CD8-positive, alpha-beta T cell (primary cell): ENCODE measurements at regions of chr16 and their contacts with region 1.

Region 1: DNA sequence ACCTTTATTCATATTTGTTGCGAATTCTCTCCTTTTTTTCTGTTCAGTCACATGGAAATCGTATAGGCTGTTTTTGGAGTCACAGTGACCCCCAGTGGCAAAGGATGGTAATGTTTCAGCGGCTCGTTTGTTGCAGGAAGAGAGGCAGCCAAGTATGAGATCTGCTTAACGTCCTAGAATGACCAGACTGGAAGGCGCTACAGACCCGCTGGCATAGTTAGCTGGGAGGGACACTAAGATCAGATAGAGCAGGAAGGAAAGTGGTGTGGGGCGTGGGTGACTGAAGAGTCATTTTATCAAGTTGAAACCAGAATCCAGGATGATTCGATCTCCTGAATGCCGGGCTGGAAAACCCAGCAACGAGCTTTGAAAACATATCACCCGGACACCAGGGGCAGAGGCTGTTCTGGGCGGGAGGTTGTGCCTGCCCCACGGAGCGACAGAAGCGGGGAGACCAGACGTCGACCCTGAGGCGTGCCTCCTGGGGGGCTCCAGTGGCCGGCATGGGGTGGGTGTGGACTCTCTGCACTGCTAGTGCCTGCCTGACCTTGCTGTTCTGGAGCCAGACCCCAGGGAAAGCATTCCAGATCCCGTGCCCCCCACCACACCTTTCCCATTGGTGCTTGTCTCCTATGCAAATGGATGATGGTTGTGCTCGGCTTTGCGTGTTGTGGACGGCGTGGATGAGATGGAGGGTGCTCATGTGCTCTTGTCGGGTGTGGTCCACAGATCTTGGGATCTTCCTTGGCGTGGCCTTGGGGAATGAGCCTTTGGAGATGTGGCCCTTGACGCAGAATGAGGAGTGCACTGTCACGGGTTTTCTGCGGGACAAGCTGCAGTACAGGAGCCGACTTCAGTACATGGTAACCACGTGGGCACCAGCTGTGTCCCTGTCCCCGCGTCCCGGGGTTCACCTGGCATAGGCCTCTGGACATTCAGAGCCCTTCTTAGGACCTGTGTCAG is 7.7 kb downstream of the IL34 start:
- DNase-seq: peak; percentile 65 to 89 (median 79)
- ATAC-seq: peak; percentile 90
- H3K4me3 ChIP-seq: no peak overlapping the region
- H3K4me3 Mint-ChIP-seq: peak overlapping the region; percentile 13
- H3K27ac ChIP-seq: no peak overlapping the region
- H3K27ac Mint-ChIP-seq: no peak overlapping the region
- H3K4me1 ChIP-seq: no peaks in the 10 kb centered on the region
- H3K4me1 Mint-ChIP-seq: peaks cover 4% of the 10 kb centered on the region
- H3K27me3 ChIP-seq: no peaks in the 10 kb centered on the region
- H3K27me3 Mint-ChIP-seq: peaks cover 2% of the 10 kb centered on the region
- CTCF ChIP-seq: peak; percentile 80

Region 2: GRCh38 chr16:69709456-69710084 is 944.5 kb before region 1 on chr16:
- CTCF ChIA-PET with region 1: no interaction called
- POLR2A ChIA-PET with region 1: no interaction called
- intact Hi-C with region 1: loop called in 1 of 2 experiments (anchors 5 kb)
- DNase-seq: peak in 2 of 9 experiments; percentile 66 to 78
- ATAC-seq: peak; percentile 55
- H3K4me3 ChIP-seq: no peak overlapping the region
- H3K4me3 Mint-ChIP-seq: no peak overlapping the region
- H3K27ac ChIP-seq: no peak overlapping the region
- H3K27ac Mint-ChIP-seq: no peak overlapping the region
- H3K4me1 ChIP-seq: no peaks in the 10 kb centered on the region
- H3K4me1 Mint-ChIP-seq: peaks cover 4% of the 10 kb centered on the region
- H3K27me3 ChIP-seq: no peaks in the 10 kb centered on the region
- H3K27me3 Mint-ChIP-seq: no peaks in the 10 kb centered on the region
- CTCF ChIP-seq: peak; percentile 87

Region 3: DNA sequence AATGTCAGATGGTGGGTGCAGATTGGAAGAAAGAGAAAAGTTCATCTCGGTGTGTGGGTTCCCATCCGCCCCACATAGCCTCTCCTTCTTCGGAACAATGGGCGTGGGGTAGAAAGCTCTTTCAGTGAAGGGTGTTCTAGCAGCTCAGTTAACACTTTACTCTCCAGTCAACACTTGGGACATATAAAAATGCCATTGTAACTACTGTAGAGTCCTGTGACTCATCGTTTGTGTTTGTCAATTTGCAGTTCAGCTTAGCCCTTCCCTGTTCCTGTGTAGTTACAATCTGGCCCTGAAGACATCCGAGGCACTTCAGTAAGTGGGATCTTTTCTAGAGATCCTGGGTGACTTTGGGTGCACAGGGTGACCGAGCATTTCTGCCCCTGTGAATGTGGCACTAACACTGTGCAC is 492.0 kb before region 1 on chr16:
- CTCF ChIA-PET with region 1: interaction called, 4 read pairs
- POLR2A ChIA-PET with region 1: no interaction called
- intact Hi-C with region 1: loop called (anchors 10 kb)
- DNase-seq: no peak
- ATAC-seq: no peak
- H3K4me3 ChIP-seq: no peak overlapping the region
- H3K4me3 Mint-ChIP-seq: no peak overlapping the region
- H3K27ac ChIP-seq: no peak overlapping the region
- H3K27ac Mint-ChIP-seq: peak overlapping the region; percentile 24
- H3K4me1 ChIP-seq: no peaks in the 10 kb centered on the region
- H3K4me1 Mint-ChIP-seq: peaks cover 4% of the 10 kb centered on the region
- H3K27me3 ChIP-seq: no peaks in the 10 kb centered on the region
- H3K27me3 Mint-ChIP-seq: no peaks in the 10 kb centered on the region
- CTCF ChIP-seq: no peak

Region 4: DNA sequence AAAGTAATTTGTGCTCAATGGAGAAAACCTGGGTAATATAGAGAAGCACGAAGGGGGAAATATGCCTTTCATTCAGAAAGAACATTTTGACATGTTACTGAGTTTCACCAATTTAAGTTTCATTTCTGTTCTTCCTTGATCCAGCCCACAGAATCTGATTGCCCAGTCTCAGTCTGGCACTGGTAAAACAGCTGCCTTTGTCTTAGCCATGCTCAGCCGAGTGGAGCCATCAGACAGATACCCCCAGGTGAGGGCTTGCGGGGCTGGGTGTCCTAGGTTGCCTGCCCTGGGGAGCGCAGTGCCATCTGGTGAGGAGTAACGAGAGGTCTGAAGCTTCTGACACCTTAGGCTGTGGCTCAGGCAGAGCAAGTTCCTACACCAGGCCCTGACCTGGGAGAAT is 289.7 kb before region 1 on chr16:
- CTCF ChIA-PET with region 1: interaction called, 7 read pairs
- POLR2A ChIA-PET with region 1: no interaction called
- intact Hi-C with region 1: loop called in 1 of 2 experiments (anchors 1 kb)
- DNase-seq: no peak
- ATAC-seq: no peak
- H3K4me3 ChIP-seq: no peak overlapping the region
- H3K4me3 Mint-ChIP-seq: no peak overlapping the region
- H3K27ac ChIP-seq: no peak overlapping the region
- H3K27ac Mint-ChIP-seq: no peak overlapping the region
- H3K4me1 ChIP-seq: no peaks in the 10 kb centered on the region
- H3K4me1 Mint-ChIP-seq: peaks cover 2% of the 10 kb centered on the region
- H3K27me3 ChIP-seq: no peaks in the 10 kb centered on the region
- H3K27me3 Mint-ChIP-seq: no peaks in the 10 kb centered on the region
- CTCF ChIP-seq: no peak

Region 5: GRCh38 chr16:70534971-70535370 is 119.1 kb before region 1 on chr16:
- CTCF ChIA-PET with region 1: no interaction called
- POLR2A ChIA-PET with region 1: no interaction called
- intact Hi-C with region 1: loop called in 1 of 2 experiments (anchors 5 kb)
- DNase-seq: no peak
- ATAC-seq: no peak
- H3K4me3 ChIP-seq: no peak overlapping the region
- H3K4me3 Mint-ChIP-seq: no peak overlapping the region
- H3K27ac ChIP-seq: no peak overlapping the region
- H3K27ac Mint-ChIP-seq: no peak overlapping the region
- H3K4me1 ChIP-seq: no peaks in the 10 kb centered on the region
- H3K4me1 Mint-ChIP-seq: peaks cover 32% of the 10 kb centered on the region
- H3K27me3 ChIP-seq: no peaks in the 10 kb centered on the region
- H3K27me3 Mint-ChIP-seq: no peaks in the 10 kb centered on the region
- CTCF ChIP-seq: no peak

Region 6: DNA sequence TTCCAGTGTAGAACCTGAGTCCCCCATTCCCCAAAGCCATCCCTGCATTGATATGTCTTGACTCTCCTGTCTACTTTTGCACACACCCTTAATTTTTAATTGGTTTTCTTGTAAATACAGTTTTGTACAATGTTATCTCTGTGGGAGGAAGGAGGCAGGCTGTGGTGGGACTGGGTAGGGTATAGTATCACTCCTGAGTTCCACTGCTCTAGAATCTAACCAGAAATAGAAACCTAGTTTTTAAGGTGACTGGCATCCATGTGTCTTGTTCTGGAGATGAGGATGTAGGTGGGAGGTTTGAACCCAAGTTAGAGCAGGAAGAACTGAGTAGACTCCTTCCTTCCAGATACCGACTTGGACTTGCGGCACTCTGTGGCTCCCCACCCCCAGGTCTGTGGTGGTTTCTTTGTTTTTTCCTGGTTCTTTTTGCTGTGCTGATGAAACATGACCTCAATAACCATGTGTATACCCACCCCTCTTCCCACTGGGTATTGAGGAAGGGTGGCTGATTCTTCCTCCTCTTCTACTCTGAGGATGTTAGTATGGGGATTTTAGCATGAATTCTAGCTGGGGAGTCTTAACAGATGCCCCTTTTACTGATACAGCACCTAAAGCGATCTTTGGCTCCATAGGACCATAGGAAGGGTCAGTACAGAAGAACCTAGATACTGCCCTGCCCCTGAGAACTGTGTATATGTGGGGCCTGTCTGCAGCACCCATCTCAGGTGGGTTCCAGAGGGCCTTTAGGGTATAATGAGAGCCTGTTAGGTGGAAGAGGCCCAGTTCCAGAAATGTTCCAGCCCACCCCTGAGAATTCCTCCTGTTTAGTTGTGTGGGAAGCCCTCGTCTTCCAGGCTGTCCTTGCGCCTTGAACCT is 81.8 kb before region 1 on chr16:
- CTCF ChIA-PET with region 1: no interaction called
- POLR2A ChIA-PET with region 1: no interaction called
- intact Hi-C with region 1: no loop called
- DNase-seq: no peak
- ATAC-seq: no peak
- H3K4me3 ChIP-seq: no peak overlapping the region
- H3K4me3 Mint-ChIP-seq: no peak overlapping the region
- H3K27ac ChIP-seq: no peak overlapping the region
- H3K27ac Mint-ChIP-seq: peak overlapping the region; percentile 84
- H3K4me1 ChIP-seq: no peaks in the 10 kb centered on the region
- H3K4me1 Mint-ChIP-seq: peaks cover 11% of the 10 kb centered on the region
- H3K27me3 ChIP-seq: no peaks in the 10 kb centered on the region
- H3K27me3 Mint-ChIP-seq: no peaks in the 10 kb centered on the region
- CTCF ChIP-seq: no peak

Region 7: DNA sequence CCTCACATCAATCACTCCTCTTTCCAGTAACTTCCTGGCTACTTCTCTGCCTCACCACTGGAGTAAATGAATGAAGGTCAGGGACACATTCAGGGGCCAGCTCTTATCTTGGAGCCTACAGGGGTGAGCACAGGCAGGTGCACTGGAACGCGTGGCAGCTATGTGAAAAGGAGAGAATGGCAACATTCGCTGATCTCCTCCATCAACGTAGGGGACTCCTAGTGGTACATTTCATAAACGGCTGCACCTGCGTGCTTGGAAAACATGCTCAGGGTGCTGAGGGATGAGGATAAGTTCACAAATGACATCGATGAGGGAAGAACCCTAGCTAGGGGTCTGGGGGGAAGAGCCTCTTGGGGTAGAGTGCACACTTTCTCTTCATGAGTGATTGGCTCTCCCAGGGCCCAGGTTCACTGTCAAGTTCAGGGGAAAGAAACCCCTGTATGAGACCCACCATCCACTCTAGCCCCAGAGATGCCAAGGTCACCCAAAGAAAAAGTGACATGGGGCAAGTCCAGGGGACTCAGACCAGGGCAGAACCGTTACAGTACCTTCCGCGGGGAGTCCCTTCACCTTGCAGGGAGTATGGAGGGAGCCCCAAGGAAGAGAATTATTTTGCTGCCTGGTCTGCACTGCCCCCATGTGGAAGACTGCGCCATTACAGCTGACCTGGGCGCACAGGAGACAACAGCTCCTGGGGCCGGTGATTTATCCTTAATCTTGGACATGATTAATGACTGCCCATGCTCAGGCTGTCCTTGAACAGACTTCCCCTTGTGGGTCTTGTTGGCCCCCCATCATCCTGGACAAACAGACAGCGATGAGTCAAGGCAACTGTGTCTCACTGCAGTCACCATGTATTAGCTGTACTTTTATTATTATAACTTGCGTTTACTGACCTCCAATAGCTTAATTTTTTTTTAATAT is 116.8 kb after region 1 on chr16:
- CTCF ChIA-PET with region 1: interaction called, 19 read pairs
- POLR2A ChIA-PET with region 1: no interaction called
- intact Hi-C with region 1: no loop called
- DNase-seq: peak; percentile 39 to 80 (median 59)
- ATAC-seq: peak; percentile 93
- H3K4me3 ChIP-seq: no peak overlapping the region
- H3K4me3 Mint-ChIP-seq: no peak overlapping the region
- H3K27ac ChIP-seq: no peak overlapping the region
- H3K27ac Mint-ChIP-seq: no peak overlapping the region
- H3K4me1 ChIP-seq: no peaks in the 10 kb centered on the region
- H3K4me1 Mint-ChIP-seq: no peaks in the 10 kb centered on the region
- H3K27me3 ChIP-seq: no peaks in the 10 kb centered on the region
- H3K27me3 Mint-ChIP-seq: no peaks in the 10 kb centered on the region
- CTCF ChIP-seq: peak; percentile 95